ENCODE measurements at regions of chr18 and their contacts with region 1.

Region 1: DNA sequence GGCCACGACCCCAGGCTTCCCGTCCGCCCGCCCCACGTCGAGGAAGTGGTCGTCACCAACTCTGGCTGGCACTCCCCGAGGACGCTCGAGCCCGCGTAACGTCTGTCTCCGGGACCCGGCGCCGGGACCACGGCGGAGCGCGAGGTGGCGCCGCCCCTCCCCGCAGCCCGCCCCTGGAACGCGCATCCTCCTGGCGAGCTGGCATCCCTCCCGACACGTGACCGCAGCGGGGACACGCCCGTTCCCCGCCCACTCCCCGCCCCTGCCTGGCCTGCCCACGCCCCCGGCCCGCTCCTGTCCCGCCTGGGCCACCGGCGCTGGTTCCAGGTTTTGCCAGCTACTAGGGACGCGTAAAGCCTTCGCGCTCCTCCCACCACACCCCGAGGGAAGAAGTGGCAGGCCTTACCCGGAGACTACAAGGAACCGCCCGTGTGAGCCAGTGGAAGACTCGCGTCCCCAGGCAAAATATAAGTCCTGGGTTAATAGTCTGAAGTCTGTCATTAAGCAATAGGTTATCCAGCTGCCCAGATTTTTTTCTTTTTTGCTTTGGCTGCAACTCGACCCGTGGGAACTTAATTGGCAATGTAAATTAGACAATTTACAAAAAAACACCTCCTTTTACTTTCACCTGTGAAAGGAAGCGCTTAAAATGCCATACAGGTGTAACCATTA is at the start of gene OSBPL1A:
- DNase-seq: peak; percentile 88
- ATAC-seq: peak; percentile 86
- H3K4me3 Mint-ChIP-seq: peak within 1 kb of the TSS; percentile 76
- H3K27ac Mint-ChIP-seq: peak within 1 kb of the TSS; percentile 59
- H3K4me1 Mint-ChIP-seq: peaks cover 28% of the 10 kb centered on the region
- H3K27me3 Mint-ChIP-seq: peaks cover 16% of the 10 kb centered on the region
- total RNA-seq, gene OSBPL1A: 2.9 to 3.4 TPM

Region 2: GRCh38 chr18:24368749-24369148 is 29.1 kb before region 1 on chr18:
- CTCF ChIA-PET with region 1: interaction called, 10 read pairs
- POLR2A ChIA-PET with region 1: interaction called, 6 read pairs
- intact Hi-C with region 1: loop called (anchors 1 to 2 kb)
- DNase-seq: peak; percentile 77
- ATAC-seq: peak; percentile 88
- H3K4me3 Mint-ChIP-seq: peak overlapping the region; percentile 22
- H3K27ac Mint-ChIP-seq: peak overlapping the region; percentile 77
- H3K4me1 Mint-ChIP-seq: peaks cover 28% of the 10 kb centered on the region
- H3K27me3 Mint-ChIP-seq: peaks cover 3% of the 10 kb centered on the region

Region 3: GRCh38 chr18:24426398-24427294 is 28.8 kb after region 1 on chr18 and contains the start of gene IMPACT:
- CTCF ChIA-PET with region 1: interaction called, 3 read pairs
- POLR2A ChIA-PET with region 1: no interaction called
- intact Hi-C with region 1: loop called in 1 of 2 experiments (anchors 2 kb)
- DNase-seq: peak; percentile 86
- ATAC-seq: peak; percentile 94
- H3K4me3 Mint-ChIP-seq: peak within 1 kb of the TSS; percentile 85
- H3K27ac Mint-ChIP-seq: peak within 1 kb of the TSS; percentile 90
- H3K4me1 Mint-ChIP-seq: peaks cover 29% of the 10 kb centered on the region
- H3K27me3 Mint-ChIP-seq: peaks cover 19% of the 10 kb centered on the region
- total RNA-seq, gene IMPACT: 15.4 to 18.3 TPM

Region 4: DNA sequence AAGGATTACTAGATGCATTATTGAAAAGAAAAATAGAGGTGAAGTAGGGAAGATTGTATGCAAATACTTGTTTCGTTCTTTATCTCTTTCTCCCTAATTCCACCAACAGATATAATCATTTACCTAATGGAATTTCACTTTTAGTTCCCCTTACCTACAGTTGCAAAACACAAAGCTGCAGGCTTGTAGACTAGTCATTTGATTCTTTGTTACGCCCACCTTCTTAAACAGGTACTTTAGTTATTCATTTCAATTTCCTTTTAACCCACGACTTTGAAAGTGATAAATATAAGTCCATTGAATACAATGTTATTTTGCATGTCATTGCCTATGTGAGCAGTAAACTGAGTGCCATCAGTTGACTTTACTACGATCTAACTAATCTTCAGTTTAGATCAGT is 58.7 kb after region 1 on chr18:
- CTCF ChIA-PET with region 1: no interaction called
- POLR2A ChIA-PET with region 1: no interaction called
- intact Hi-C with region 1: loop called in 1 of 2 experiments (anchors 5 kb)
- DNase-seq: no peak
- ATAC-seq: peak; percentile 81
- H3K4me3 Mint-ChIP-seq: no peak overlapping the region
- H3K27ac Mint-ChIP-seq: no peak overlapping the region
- H3K4me1 Mint-ChIP-seq: peaks cover 23% of the 10 kb centered on the region
- H3K27me3 Mint-ChIP-seq: no peaks in the 10 kb centered on the region

Measured in activated CD4-positive, alpha-beta T cell treated with anti-CD3 and anti-CD28 coated beads for 36 hours (primary cell).